HCT116 (cell line): ENCODE measurements at regions of chr10 and their contacts with region 1.

Region 1: GRCh38 chr10:42782446-42783180 is at the start of gene BMS1:
- DNase-seq: peak; percentile 93
- ATAC-seq: peak; percentile 88
- H3K4me3 ChIP-seq: peak within 1 kb of the TSS; percentile 87 to 99
- H3K27ac ChIP-seq: peak within 1 kb of the TSS; percentile 94
- H3K4me1 ChIP-seq: peaks cover 14 to 19% of the 10 kb centered on the region in 2 experiments; a peak in 3 of 4 replicates
- H3K27me3 ChIP-seq: no peaks in the 10 kb centered on the region
- CTCF ChIP-seq: no peak
- POLR2A ChIP-seq: peak; percentile 89
- RAD21 ChIP-seq: no peak; the same call in 1 of the 2 replicates
- total RNA-seq, gene BMS1: 40.0 TPM

Region 2: DNA sequence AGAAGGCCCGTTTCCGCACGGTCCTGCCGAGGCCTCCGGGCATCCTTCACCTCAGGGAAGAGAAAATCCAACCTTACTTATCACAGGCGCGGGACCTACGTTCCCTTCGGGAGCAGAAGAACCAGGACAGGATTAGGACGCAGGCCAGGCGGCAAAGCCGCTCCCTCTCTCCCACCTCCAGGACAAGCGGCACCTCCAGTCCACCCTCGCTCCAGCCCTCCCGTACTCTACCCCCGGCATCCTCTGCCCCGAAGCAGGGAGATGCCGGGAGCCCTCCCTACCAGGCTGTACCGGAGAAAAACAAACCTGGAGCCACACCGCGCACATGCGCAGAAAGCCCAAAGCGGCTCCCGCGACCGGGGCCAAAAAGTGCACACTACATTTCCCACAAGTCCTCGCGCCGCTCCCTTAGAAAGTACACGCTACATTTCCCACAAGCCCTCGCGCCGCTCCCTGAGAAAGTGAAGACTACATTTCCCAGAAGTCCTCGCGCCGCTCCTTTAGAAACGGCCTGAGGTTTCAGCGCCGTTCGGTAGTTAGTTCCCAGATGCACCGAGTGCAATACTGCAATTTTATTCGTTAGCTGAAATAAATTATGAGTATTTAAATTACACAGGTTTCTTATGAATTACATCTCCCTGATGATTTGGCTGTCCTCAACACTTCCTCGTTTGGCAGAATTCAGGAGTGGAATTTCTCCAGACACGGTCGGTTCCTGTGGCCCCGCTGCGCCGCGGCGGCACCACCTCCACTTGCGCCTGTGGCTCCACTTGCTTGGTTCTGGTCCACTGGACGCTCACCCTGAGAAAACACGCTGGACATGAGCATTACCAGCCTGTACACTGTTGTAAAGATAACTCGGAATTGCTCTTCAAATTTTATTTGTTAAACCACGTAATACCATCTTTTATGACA is 229.9 kb before region 1 on chr10:
- CTCF ChIA-PET with region 1: no interaction called
- POLR2A ChIA-PET with region 1: no interaction called
- RAD21 ChIA-PET with region 1: no interaction called
- intact Hi-C with region 1: loop called (anchors 1 kb)
- DNase-seq: peak; percentile 95
- ATAC-seq: peak; percentile 93
- H3K4me3 ChIP-seq: peak overlapping the region; percentile 74 to 82
- H3K27ac ChIP-seq: peak overlapping the region; percentile 35; the same call in 1 of the 2 replicates
- H3K4me1 ChIP-seq: peaks cover 4 to 17% of the 10 kb centered on the region in 2 experiments; a peak in 3 of 4 replicates
- H3K27me3 ChIP-seq: no peaks in the 10 kb centered on the region
- CTCF ChIP-seq: no peak
- POLR2A ChIP-seq: peak; percentile 35
- RAD21 ChIP-seq: no peak

Region 3: GRCh38 chr10:42638055-42638820 is 144.4 kb before region 1 on chr10 and contains the start of gene ZNF33B:
- CTCF ChIA-PET with region 1: no interaction called
- POLR2A ChIA-PET with region 1: no interaction called
- RAD21 ChIA-PET with region 1: no interaction called
- intact Hi-C with region 1: loop called (anchors 1 kb)
- DNase-seq: peak; percentile 96
- ATAC-seq: peak; percentile 93
- H3K4me3 ChIP-seq: peak within 1 kb of the TSS; percentile 67 to 75
- H3K27ac ChIP-seq: peak within 1 kb of the TSS; percentile 78
- H3K4me1 ChIP-seq: peaks cover 10 to 21% of the 10 kb centered on the region in 2 experiments
- H3K27me3 ChIP-seq: no peaks in the 10 kb centered on the region
- CTCF ChIP-seq: no peak
- POLR2A ChIP-seq: peak; percentile 91
- RAD21 ChIP-seq: no peak
- total RNA-seq, gene ZNF33B: 21.1 TPM

Region 4: DNA sequence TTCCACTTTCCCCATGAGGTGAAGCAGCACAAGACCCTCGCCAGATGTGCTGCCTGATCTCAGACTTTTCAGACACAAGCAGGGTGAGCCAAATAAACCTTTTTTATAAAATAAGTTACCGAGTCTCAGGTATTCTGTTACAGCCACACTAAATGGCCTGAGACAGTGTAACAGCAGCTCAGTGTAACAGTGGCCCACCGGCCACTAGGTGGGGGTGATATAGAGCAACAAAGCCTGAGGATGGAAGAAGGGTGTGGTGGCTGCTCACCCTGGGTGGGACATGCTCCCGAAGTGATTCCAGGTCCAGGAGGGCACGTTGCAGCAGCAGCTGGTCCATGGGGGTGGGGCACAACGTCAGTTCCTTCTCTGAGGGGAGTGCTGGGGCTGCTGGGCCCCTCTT is 44.6 kb after region 1 on chr10:
- CTCF ChIA-PET with region 1: no interaction called
- POLR2A ChIA-PET with region 1: no interaction called
- RAD21 ChIA-PET with region 1: no interaction called
- intact Hi-C with region 1: no loop called
- DNase-seq: no peak
- ATAC-seq: peak; percentile 70
- H3K4me3 ChIP-seq: no peak overlapping the region
- H3K27ac ChIP-seq: no peak overlapping the region
- H3K4me1 ChIP-seq: peaks cover 0 to 3% of the 10 kb centered on the region in 2 experiments; a peak in 1 of 4 replicates
- H3K27me3 ChIP-seq: no peaks in the 10 kb centered on the region
- CTCF ChIP-seq: peak in 2 of 3 experiments; percentile 22 to 26; a peak in 1 of 6 replicates
- POLR2A ChIP-seq: no peak
- RAD21 ChIP-seq: no peak

Region 5: GRCh38 chr10:43093423-43094076 is 310.9 kb after region 1 on chr10:
- CTCF ChIA-PET with region 1: no interaction called
- POLR2A ChIA-PET with region 1: no interaction called
- RAD21 ChIA-PET with region 1: no interaction called
- intact Hi-C with region 1: no loop called
- DNase-seq: no peak
- ATAC-seq: peak; percentile 72
- H3K4me3 ChIP-seq: no peak overlapping the region
- H3K27ac ChIP-seq: no peak overlapping the region
- H3K4me1 ChIP-seq: no peaks in the 10 kb centered on the region
- H3K27me3 ChIP-seq: no peaks in the 10 kb centered on the region
- CTCF ChIP-seq: no peak
- POLR2A ChIP-seq: no peak
- RAD21 ChIP-seq: peak; percentile 34; the same call in 1 of the 2 replicates